ENCODE measurements at regions of chr5 and their contacts with region 1.

Region 1: DNA sequence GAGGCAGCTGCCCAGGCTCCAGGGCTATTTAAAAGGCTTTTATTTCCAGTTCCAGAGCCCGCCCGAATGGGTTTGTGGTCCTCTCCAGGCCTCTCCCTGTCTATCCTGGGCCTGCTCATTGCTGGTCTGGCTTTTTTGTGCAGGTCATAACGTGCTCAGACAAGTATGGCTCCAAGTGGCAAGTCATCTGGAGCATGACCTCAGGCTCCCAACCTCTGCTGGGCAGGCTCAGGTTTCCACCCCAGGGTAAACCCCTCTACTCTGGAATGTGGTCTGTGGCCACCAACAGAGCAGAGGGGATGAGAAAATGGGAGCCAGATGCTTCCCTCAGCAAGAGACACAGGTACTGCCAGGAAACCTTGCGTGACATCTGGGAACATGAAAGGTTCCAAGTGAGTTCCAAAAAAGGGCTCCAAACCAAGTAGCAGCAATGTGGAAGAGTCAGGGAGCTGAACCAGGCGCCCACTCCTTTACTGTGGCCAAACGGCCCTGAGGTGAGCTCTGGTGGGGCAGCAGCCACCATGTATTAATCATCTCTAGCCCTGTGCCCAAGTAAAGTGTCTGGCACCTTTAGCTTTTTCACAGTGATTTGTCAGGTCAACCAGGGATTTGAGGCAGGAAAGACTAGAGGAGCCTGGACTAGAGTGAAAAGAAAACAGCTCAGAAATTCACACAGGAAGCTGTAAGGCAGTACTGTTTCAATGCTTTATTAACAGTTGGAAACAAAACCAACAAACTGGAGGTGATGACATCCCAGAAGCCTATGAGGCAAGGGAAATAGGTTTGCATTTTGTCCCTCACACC is 25.7 kb downstream of the PCDHGC5 start:
- DNase-seq: peak; percentile 67
- H3K4me3 ChIP-seq: peak overlapping the region; percentile 35
- CTCF ChIP-seq: no peak

Region 2: DNA sequence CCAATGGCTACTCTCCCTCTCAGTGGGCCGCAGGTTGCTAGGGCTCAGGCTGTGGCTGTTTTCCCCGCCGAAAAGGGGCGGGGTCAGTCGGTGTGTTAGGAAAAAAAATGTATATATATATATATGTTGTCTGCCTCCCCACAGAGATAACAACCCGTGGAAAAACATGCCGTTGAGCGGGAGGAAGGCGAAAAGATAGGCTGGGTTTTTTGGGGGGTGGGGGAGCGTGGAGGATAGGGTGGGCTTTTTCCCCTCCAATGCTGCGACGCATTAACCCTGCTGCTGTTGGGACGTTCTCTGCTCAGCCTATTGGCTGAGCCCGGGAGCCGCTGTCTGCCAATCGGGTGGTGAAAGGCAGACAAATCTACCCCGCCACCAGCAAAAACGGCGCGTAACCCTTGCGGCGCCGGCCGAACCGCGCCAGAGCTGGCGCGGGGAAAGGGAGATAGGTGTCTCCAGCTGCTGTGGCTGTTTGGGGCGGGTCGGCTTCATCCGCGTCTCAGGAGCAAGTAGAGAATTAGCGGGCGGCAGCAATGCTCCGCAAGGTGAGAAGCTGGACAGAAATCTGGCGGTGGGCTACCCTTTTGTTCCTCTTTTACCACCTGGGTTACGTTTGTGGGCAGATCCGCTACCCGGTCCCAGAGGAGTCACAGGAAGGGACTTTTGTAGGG is 29.8 kb before region 1 on chr5 and contains the start of gene PCDHGC4:
- in situ Hi-C with region 1: loop called (anchors 5 kb)
- DNase-seq: no peak
- H3K4me3 ChIP-seq: peak within 1 kb of the TSS; percentile 32
- CTCF ChIP-seq: no peak

Region 3: DNA sequence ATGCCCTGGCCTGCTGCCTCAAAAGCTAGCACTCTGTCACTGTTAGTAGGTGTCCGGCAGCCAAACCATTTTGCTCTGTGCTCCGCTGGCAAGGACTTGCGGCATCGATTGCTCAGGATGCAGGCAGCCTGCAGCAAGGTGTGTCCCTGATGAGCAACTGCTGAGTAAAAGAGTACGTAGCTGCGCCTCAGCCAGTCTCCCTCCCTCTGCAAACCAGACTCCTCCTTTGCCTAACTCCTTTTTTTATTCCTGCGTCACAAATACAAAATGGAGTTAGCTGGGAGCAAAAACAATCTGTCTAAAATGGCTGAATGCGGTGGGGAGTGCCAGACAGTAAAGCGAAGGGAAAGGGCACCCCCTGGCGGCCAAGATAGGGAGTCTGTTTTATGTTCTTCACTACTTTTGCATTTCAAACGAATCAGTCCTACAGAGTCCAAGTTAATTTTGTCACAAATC is 43.2 kb after region 1 on chr5:
- in situ Hi-C with region 1: no loop called
- DNase-seq: peak; percentile 95
- H3K4me3 ChIP-seq: peak overlapping the region; percentile 17
- CTCF ChIP-seq: peak; percentile 75